MCF 10A (cell line): ENCODE measurements at regions of chr1 and their contacts with region 1.

Region 1: GRCh38 chr1:244302889-244303613 is 148.7 kb downstream of the ADSS2 start:
- DNase-seq: peak; percentile 77
- H3K4me3 Mint-ChIP-seq: no peak overlapping the region
- H3K27ac Mint-ChIP-seq: peak overlapping the region; percentile 11
- H3K4me1 Mint-ChIP-seq: peaks cover 40% of the 10 kb centered on the region
- H3K27me3 Mint-ChIP-seq: no peaks in the 10 kb centered on the region
- CTCF ChIP-seq: no peak

Region 2: GRCh38 chr1:243708210-243708609 is 594.8 kb before region 1 on chr1:
- CTCF ChIA-PET with region 1: interaction called, 8 read pairs
- POLR2A ChIA-PET with region 1: interaction called, 3 read pairs
- intact Hi-C with region 1: loop called (anchors 1 kb)
- DNase-seq: peak; percentile 32
- H3K4me3 Mint-ChIP-seq: no peak overlapping the region
- H3K27ac Mint-ChIP-seq: no peak overlapping the region
- H3K4me1 Mint-ChIP-seq: no peaks in the 10 kb centered on the region
- H3K27me3 Mint-ChIP-seq: no peaks in the 10 kb centered on the region
- CTCF ChIP-seq: peak; percentile 79

Region 3: DNA sequence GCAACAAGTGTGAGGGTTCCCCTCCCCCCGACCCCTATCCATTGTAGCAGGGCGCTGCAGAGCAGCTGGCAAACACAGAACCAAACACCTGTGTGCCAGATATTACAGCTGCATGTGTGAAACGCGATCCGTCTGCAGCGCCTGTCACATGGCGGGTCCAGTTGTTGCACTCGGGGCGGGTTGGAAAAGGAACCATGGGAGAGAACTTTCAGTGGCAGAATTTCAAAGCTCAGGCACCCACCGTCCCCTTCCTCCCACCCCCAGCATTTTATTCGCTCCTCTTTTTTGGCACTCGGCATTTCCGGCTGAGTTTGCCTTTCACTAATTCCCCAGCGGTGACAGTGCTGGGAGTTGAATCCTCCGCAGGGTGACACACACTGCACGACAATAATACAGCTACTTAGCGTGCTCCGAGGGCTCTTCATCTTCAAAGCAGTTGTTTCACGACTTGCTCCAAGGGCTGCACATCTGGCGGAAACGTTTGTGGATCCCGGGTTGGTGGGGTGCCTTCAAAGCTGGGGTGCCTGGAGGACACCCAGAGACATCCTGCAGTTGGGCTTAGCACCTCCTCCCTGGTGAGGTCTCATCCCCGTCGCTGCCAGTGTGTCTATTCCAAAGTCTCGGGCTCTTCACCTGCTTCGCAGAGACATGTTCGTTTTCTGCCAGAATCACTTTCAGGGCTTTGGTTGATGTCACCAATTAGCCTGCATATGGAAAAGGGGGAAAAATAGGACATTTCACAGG is 71.3 kb before region 1 on chr1:
- CTCF ChIA-PET with region 1: no interaction called
- POLR2A ChIA-PET with region 1: no interaction called
- intact Hi-C with region 1: no loop called
- DNase-seq: peak; percentile 90
- H3K4me3 Mint-ChIP-seq: peak overlapping the region; percentile 73
- H3K27ac Mint-ChIP-seq: peak overlapping the region; percentile 74
- H3K4me1 Mint-ChIP-seq: peaks cover 16% of the 10 kb centered on the region
- H3K27me3 Mint-ChIP-seq: no peaks in the 10 kb centered on the region
- CTCF ChIP-seq: no peak

Region 4: GRCh38 chr1:244280859-244281258 is 22.2 kb before region 1 on chr1:
- CTCF ChIA-PET with region 1: interaction called, 119 read pairs
- POLR2A ChIA-PET with region 1: interaction called, 7 read pairs
- intact Hi-C with region 1: loop called (anchors 1 kb)
- DNase-seq: peak; percentile 90
- H3K4me3 Mint-ChIP-seq: no peak overlapping the region
- H3K27ac Mint-ChIP-seq: peak overlapping the region; percentile 28
- H3K4me1 Mint-ChIP-seq: peaks cover 21% of the 10 kb centered on the region
- H3K27me3 Mint-ChIP-seq: no peaks in the 10 kb centered on the region
- CTCF ChIP-seq: no peak

Region 5: GRCh38 chr1:244341455-244342450 is 38.7 kb after region 1 on chr1:
- CTCF ChIA-PET with region 1: interaction called, 13 read pairs
- POLR2A ChIA-PET with region 1: interaction called, 4 read pairs
- intact Hi-C with region 1: no loop called
- DNase-seq: peak; percentile 94
- H3K4me3 Mint-ChIP-seq: peak overlapping the region; percentile 12
- H3K27ac Mint-ChIP-seq: peak overlapping the region; percentile 76
- H3K4me1 Mint-ChIP-seq: peaks cover 9% of the 10 kb centered on the region
- H3K27me3 Mint-ChIP-seq: no peaks in the 10 kb centered on the region
- CTCF ChIP-seq: no peak

Region 6: DNA sequence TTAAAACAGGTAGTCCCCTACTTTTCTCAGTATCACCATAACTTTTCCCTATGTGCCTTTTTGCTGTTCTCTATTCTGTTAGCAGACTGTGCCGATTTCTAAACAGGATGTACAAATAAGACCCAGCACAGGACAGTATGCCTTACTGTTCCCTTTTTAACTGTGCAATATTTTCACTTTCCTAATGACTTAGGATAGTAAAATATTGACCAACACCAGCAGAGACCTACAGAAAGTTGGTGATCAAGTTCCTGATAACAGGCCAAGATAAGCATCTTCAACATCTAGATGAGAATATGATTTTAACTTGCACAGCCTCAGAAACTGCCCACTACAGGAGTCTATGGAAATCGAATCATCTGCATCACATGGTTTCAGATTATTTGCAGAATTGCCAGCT is 106.7 kb after region 1 on chr1:
- CTCF ChIA-PET with region 1: interaction called, 17 read pairs
- POLR2A ChIA-PET with region 1: interaction called, 6 read pairs
- intact Hi-C with region 1: loop called (anchors 1 kb)
- DNase-seq: no peak
- H3K4me3 Mint-ChIP-seq: no peak overlapping the region
- H3K27ac Mint-ChIP-seq: no peak overlapping the region
- H3K4me1 Mint-ChIP-seq: peaks cover 16% of the 10 kb centered on the region
- H3K27me3 Mint-ChIP-seq: no peaks in the 10 kb centered on the region
- CTCF ChIP-seq: no peak

Region 7: GRCh38 chr1:244545511-244545910 is 242.5 kb after region 1 on chr1:
- CTCF ChIA-PET with region 1: no interaction called
- POLR2A ChIA-PET with region 1: no interaction called
- intact Hi-C with region 1: no loop called
- DNase-seq: peak; percentile 41
- H3K4me3 Mint-ChIP-seq: no peak overlapping the region
- H3K27ac Mint-ChIP-seq: no peak overlapping the region
- H3K4me1 Mint-ChIP-seq: no peaks in the 10 kb centered on the region
- H3K27me3 Mint-ChIP-seq: no peaks in the 10 kb centered on the region
- CTCF ChIP-seq: no peak